Ascending aorta (tissue), 2 donors: ENCODE measurements at regions of chr3 and their contacts with region 1.

Region 1: GRCh38 chr3:184543843-184544512 is 17.6 kb upstream of the EPHB3 start:
- DNase-seq: peak in 1 of 2 donors; percentile 85
- H3K4me3 ChIP-seq: no peak overlapping the region
- H3K27ac ChIP-seq: no peak overlapping the region
- H3K4me1 ChIP-seq: no peaks in the 10 kb centered on the region
- H3K27me3 ChIP-seq: no peaks in the 10 kb centered on the region
- CTCF ChIP-seq: peak; percentile 83 to 95 (median 87)

Region 2: DNA sequence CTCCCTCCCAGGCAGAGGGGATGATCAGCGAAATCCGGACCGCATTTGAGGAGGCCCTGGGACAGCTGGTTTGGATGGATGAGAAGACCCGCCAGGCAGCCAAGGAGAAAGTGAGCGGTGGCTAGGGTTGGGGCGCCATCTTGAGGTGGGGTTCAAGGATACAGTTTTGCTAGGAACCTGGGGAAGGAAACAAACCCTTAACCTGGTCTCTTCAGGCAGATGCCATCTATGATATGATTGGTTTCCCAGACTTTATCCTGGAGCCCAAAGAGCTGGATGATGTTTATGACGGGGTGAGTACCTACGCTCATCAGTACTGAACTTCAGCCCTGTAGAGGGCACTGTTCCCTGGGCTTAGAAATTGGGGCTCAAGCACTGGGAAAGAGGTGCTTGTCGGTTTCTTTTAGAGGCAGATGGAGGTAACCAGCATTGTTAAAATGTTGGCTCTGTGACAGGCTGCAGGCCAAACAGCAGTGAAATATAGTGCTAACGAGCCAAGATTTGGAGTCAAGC is 254.5 kb before region 1 on chr3:
- intact Hi-C with region 1: loop called (anchors 5 kb)
- DNase-seq: no peak
- H3K4me3 ChIP-seq: no peak overlapping the region
- H3K27ac ChIP-seq: no peak overlapping the region
- H3K4me1 ChIP-seq: no peaks in the 10 kb centered on the region
- H3K27me3 ChIP-seq: no peaks in the 10 kb centered on the region
- CTCF ChIP-seq: peak in 2 of 3 experiments; percentile 27 to 42

Region 3: DNA sequence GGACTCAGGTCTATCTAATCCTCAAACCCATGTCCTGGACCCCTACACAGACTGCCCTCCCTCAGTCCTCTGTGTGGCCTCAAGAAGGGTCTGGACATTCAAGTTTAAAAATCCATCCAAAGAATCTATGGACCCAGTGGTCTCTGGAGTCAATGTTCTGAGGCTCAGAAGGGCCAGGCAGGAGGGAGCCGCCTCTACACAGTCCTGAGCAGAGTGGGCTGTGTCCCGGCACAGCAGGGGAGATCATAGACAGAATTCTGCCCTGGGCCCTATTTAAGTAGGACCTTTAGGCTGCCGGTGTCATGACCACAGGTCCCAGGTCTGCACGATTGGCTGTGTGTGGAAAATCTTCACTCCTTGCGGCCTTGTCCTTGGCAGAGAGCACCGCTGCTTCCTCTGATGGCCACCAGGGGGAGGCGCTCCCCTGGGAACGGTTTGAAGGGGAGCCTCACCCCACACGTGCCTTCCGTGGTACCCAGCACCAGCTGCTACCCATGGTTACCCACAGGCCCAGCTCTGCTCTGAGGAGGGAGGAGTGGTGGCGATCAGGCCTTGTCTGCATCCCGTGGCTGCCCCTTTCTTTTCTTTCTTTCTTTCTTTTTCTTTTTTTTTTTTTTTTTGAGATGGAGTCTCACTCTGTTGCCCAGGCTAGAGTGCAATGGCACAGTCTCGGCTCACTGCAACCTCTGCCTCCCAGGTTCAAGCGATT is 126.2 kb before region 1 on chr3:
- intact Hi-C with region 1: loop called (anchors 5 kb)
- DNase-seq: peak in 1 of 2 donors; percentile 72
- H3K4me3 ChIP-seq: no peak overlapping the region
- H3K27ac ChIP-seq: no peak overlapping the region
- H3K4me1 ChIP-seq: no peaks in the 10 kb centered on the region
- H3K27me3 ChIP-seq: no peaks in the 10 kb centered on the region
- CTCF ChIP-seq: peak; percentile 70 to 86 (median 71)

Region 4: DNA sequence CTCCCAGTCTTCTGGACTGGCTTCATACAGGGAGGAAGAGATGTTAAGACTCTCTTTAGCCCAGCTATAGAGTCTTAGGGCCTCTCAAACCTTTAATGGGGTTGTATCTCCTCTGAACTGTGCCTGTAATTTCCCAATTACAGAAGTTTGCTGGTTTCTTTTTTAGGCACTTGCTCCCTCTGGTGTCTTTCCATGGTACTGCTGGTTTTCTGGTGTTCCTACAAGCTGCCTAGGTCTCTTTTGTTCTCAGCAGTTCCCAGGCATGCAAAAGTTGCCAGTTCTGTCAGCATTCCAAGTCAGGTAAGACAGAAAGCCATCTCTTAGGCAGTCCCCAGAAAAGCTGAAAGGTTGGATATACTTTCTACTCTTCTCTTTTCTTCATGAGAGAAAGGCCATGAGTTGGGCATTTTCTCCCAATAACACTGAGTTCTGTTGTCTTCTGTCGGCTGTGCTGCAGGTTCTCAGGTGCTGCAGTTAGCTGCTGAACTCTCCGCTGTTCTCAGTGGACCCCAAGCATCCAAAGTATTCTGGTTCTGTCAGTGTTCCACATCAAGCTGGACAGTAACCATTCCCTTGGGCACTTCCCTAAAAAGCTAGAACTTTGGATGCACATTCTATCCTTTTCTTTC is 764.3 kb after region 1 on chr3:
- intact Hi-C with region 1: no loop called
- DNase-seq: no peak
- H3K4me3 ChIP-seq: no peak overlapping the region
- H3K27ac ChIP-seq: no peak overlapping the region
- H3K4me1 ChIP-seq: no peaks in the 10 kb centered on the region
- H3K27me3 ChIP-seq: no peaks in the 10 kb centered on the region
- CTCF ChIP-seq: peak in 1 of 3 experiments; percentile 36